Panc1 (cell line): ENCODE measurements at regions of chr2 and their contacts with region 1.

Region 1: DNA sequence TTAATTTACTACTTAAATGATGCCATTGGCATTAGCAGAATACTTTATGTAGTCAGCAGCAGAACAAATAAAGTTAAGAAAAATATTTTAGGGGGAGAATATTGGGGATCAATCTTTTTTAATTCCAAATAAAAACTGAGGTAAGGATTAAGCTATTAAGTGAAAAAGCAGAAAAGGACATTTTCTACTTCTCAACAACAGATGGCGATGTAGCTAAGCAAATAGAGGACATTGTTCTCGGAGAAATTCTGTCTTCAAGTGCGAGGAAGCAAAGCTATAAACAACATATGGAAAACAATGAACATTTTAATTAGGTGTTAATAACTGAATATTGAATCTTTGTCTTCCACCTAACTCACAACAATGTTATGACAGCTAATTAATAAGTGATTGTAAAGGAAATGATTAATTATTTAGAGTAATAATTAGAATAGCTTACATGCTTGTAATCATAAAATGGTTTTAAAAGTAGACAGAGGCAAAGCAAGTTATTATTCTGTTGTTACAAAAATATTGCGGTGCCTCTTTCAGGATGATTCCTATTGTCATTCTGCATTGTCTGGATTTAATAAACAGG is 32.9 kb upstream of the CCDC93 start:
- DNase-seq: no peak
- ATAC-seq: no peak
- H3K4me3 ChIP-seq: no peak overlapping the region
- H3K27ac ChIP-seq: no peak overlapping the region
- H3K4me1 ChIP-seq: 0 out of 2 replicates have a peak, but pooled peaks cover 2% of the 10 kb centered on the region
- H3K27me3 ChIP-seq: peaks cover 6% of the 10 kb centered on the region; the same call in 1 of the 2 replicates
- CTCF ChIP-seq: peak; percentile 63; the same call in 1 of the 2 replicates

Region 2: GRCh38 chr2:118186110-118186857 is 139.6 kb after region 1 on chr2:
- CTCF ChIA-PET with region 1: no interaction called
- POLR2A ChIA-PET with region 1: no interaction called
- in situ Hi-C with region 1: no loop called
- intact Hi-C with region 1: loop called (anchors 5 kb)
- DNase-seq: peak; percentile 41
- ATAC-seq: peak; percentile 96
- H3K4me3 ChIP-seq: peak overlapping the region; percentile 66 to 77
- H3K27ac ChIP-seq: peak overlapping the region; percentile 82
- H3K4me1 ChIP-seq: no peaks in the 10 kb centered on the region; the same call in 1 of the 2 replicates
- H3K27me3 ChIP-seq: peaks cover 4% of the 10 kb centered on the region; the same call in 1 of the 2 replicates
- CTCF ChIP-seq: no peak

Region 3: GRCh38 chr2:118221666-118222594 is 175.2 kb after region 1 on chr2:
- CTCF ChIA-PET with region 1: no interaction called
- POLR2A ChIA-PET with region 1: no interaction called
- in situ Hi-C with region 1: no loop called
- intact Hi-C with region 1: loop called (anchors 10 kb)
- DNase-seq: peak; percentile 64
- ATAC-seq: peak; percentile 94
- H3K4me3 ChIP-seq: no peak overlapping the region
- H3K27ac ChIP-seq: no peak overlapping the region
- H3K4me1 ChIP-seq: no peaks in the 10 kb centered on the region
- H3K27me3 ChIP-seq: peaks cover 24% of the 10 kb centered on the region
- CTCF ChIP-seq: peak; percentile 77

Region 4: GRCh38 chr2:118348380-118349034 is 301.8 kb after region 1 on chr2:
- CTCF ChIA-PET with region 1: no interaction called
- POLR2A ChIA-PET with region 1: no interaction called
- in situ Hi-C with region 1: no loop called
- intact Hi-C with region 1: loop called (anchors 10 kb)
- DNase-seq: no peak
- ATAC-seq: no peak
- H3K4me3 ChIP-seq: no peak overlapping the region
- H3K27ac ChIP-seq: no peak overlapping the region
- H3K4me1 ChIP-seq: no peaks in the 10 kb centered on the region
- H3K27me3 ChIP-seq: no peaks in the 10 kb centered on the region; the same call in 1 of the 2 replicates
- CTCF ChIP-seq: no peak

Region 5: GRCh38 chr2:118865106-118865505 is 818.4 kb after region 1 on chr2:
- CTCF ChIA-PET with region 1: no interaction called
- POLR2A ChIA-PET with region 1: no interaction called
- in situ Hi-C with region 1: no loop called
- intact Hi-C with region 1: loop called (anchors 5 kb)
- DNase-seq: no peak
- ATAC-seq: peak; percentile 95
- H3K4me3 ChIP-seq: no peak overlapping the region
- H3K27ac ChIP-seq: no peak overlapping the region
- H3K4me1 ChIP-seq: no peaks in the 10 kb centered on the region
- H3K27me3 ChIP-seq: peaks cover 3% of the 10 kb centered on the region; the same call in 1 of the 2 replicates
- CTCF ChIP-seq: peak; percentile 77

Region 6: GRCh38 chr2:119252847-119253702 is 1206.4 kb after region 1 on chr2:
- CTCF ChIA-PET with region 1: no interaction called
- POLR2A ChIA-PET with region 1: no interaction called
- in situ Hi-C with region 1: no loop called
- intact Hi-C with region 1: no loop called
- DNase-seq: peak; percentile 91
- ATAC-seq: peak; percentile 89
- H3K4me3 ChIP-seq: no peak overlapping the region
- H3K27ac ChIP-seq: peak overlapping the region; percentile 86
- H3K4me1 ChIP-seq: peaks cover 53% of the 10 kb centered on the region
- H3K27me3 ChIP-seq: no peaks in the 10 kb centered on the region
- CTCF ChIP-seq: no peak